ENCODE measurements at regions of chr1 and their contacts with region 1.

Region 1: DNA sequence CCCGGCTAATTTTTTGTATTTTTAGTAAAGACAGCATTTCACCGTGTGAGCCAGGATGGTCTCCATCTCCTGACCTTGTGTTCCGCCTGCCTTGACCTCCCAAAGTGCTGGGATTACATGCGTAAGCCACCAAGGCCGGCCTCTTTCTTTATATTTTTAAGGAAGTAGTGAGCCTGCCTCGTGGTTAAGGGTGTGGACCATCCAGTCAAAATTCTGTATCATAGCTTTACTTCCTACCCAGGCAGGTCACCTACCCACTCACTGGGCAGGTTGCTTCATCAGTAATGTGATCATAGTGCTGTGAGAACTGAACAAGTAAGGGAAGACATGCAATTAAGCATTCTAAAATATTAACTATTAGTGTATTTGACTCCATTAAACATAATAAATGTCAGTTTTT is 8.1 kb upstream of the ACOT7 start:
- DNase-seq: no peak
- H3K4me3 ChIP-seq: no peak overlapping the region
- H3K27ac ChIP-seq: no peak overlapping the region
- H3K4me1 ChIP-seq: peaks cover 0 to 8% (median 3%) of the 10 kb centered on the region in 4 donors
- H3K27me3 ChIP-seq: peaks cover 0 to 15% (median 0%) of the 10 kb centered on the region in 3 donors
- CTCF ChIP-seq: no peak
- EP300 ChIP-seq: no peak
- POLR2A ChIP-seq: no peak

Region 2: GRCh38 chr1:6041432-6042062 is 360.1 kb before region 1 on chr1:
- intact Hi-C with region 1: no loop called
- DNase-seq: peak; percentile 32 to 46
- H3K4me3 ChIP-seq: no peak overlapping the region
- H3K27ac ChIP-seq: no peak overlapping the region
- H3K4me1 ChIP-seq: peaks cover 0 to 5% (median 0%) of the 10 kb centered on the region in 4 donors
- H3K27me3 ChIP-seq: peaks cover 0 to 20% (median 0%) of the 10 kb centered on the region in 3 donors
- CTCF ChIP-seq: peak in 3 of 7 experiments; percentile 9 to 22 (median 18)
- EP300 ChIP-seq: no peak
- POLR2A ChIP-seq: no peak

Region 3: GRCh38 chr1:6359216-6360116 is 42.2 kb before region 1 on chr1:
- intact Hi-C with region 1: loop called (anchors 5 kb)
- DNase-seq: peak; percentile 88 to 92
- H3K4me3 ChIP-seq: peak overlapping the region in 3 of 4 donors; percentile 7 to 9 (median 8)
- H3K27ac ChIP-seq: peak overlapping the region; percentile 82 to 92 (median 88)
- H3K4me1 ChIP-seq: peaks cover 35 to 68% (median 62%) of the 10 kb centered on the region in 4 donors
- H3K27me3 ChIP-seq: no peaks in the 10 kb centered on the region
- CTCF ChIP-seq: no peak
- EP300 ChIP-seq: no peak
- POLR2A ChIP-seq: no peak